ENCODE measurements at regions of chr7 and their contacts with region 1.

Region 1: DNA sequence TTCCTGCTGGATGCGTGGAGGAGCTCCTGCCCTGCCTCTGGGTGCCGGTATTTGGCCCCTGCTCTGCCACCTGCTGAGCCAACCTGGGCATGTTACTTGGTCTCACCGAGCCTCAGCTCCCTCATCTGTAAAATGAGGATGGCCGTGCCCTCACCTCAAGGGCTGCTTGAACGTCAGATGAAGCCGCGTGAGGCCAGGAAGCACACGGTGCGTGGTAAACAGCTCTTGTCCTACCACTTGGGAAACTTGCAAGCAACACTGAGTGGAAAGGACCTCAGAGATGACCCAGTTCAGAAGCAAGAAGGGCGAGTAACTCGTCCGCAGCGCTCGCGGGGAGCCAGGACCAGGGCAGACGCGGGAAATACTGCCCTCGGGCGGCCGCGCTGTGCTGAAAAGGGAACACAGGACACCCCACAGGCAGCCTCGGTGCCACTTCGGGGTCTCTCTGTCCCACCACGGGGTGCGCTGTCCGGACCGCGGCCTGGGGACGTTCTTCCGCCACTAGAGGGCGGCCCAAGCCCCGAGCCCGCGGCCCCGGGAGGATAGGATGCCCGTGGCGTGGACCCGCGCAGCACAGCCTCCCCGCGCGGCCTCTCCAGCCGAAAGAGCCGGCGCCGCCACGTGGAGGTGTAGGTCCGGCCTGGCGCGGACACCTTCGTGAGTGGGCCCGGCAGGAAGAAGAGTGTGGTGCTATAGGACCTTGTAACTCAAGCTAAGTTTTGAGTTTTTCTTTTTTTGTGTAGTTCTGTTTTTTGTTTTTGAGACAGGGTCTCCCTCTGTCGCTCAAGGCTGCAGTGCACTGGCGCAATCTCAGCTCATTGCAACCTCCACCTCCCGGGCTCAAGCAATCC is 94.1 kb downstream of the PRKAG2 start:
- DNase-seq: peak; percentile 40
- H3K4me3 Mint-ChIP-seq: peak overlapping the region; percentile 63
- H3K27ac Mint-ChIP-seq: peak overlapping the region; percentile 40
- H3K4me1 Mint-ChIP-seq: peaks cover 13% of the 10 kb centered on the region
- H3K27me3 Mint-ChIP-seq: no peaks in the 10 kb centered on the region

Region 2: DNA sequence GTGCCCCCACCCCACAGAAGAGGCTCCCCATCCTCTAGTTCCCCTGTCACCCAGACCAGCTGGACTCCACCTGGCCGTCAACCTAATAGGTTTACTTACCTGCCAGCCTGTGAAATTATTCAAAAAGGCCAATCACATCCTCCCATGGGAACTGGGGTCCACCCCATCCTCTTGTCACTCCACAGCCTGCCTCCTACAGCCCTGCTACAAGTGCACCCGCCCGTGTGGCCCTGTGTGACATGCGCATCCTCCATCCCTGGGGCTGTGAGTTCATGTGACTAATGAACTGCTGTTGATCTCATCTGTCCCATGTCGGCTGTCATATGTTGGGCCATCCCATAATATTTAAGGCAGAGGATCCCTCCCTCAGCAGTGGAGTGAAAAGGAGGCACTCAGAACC is 891.1 kb before region 1 on chr7:
- intact Hi-C with region 1: no loop called
- DNase-seq: no peak
- H3K4me3 Mint-ChIP-seq: no peak overlapping the region
- H3K27ac Mint-ChIP-seq: no peak overlapping the region
- H3K4me1 Mint-ChIP-seq: no peaks in the 10 kb centered on the region
- H3K27me3 Mint-ChIP-seq: peaks cover 21% of the 10 kb centered on the region

Region 3: DNA sequence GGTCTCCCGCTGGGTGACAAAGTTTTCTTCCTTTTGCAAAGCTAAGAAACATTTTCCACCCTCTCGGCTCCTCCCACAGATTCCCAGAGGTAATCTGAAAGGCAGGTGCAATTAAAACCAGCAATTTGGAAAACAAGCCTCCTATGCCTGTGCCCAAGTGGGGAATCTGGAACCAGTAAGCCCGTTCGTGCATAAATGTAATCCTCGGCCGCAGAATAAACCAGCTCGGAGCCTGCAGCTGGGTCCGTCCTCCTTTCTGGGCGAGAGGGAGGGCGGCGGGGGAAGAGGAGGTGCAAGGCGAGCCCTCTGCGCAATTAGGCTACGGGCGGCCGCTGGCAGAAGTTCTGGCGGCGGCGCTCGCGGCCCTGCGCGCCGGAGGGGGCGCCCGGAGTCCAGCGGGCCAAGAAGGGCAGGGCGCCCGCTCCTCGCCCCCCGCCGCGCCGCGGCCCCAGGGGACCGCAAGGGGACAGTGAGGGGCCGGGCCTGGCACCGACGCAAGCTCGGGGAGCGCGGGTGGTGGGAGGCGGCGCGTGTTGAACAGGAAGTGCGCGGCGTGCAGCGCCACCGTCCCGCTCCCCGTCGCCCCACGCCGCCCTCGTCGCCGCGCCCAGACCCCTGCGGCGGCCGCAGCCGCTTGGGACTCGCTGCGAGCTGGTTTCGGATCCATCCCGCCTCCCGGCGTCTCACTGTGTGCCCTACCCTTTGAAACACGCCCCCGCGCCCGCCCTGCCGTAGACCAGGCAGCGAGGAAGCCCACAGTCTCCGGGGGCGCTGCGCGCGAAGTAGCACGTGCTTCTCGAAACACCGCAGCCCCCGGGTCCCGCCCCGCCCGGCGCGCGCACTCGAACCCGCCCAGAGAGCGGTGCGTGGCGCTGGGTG is 94.3 kb after region 1 on chr7 and contains the start of gene PRKAG2:
- intact Hi-C with region 1: loop called (anchors 2 kb)
- DNase-seq: peak; percentile 52
- H3K4me3 Mint-ChIP-seq: peak within 1 kb of the TSS; percentile 93
- H3K27ac Mint-ChIP-seq: peak within 1 kb of the TSS; percentile 78
- H3K4me1 Mint-ChIP-seq: peaks cover 10% of the 10 kb centered on the region
- H3K27me3 Mint-ChIP-seq: peaks cover 25% of the 10 kb centered on the region
- total RNA-seq, gene PRKAG2: 13.3 and 14.9 TPM in 2 replicates

Region 4: DNA sequence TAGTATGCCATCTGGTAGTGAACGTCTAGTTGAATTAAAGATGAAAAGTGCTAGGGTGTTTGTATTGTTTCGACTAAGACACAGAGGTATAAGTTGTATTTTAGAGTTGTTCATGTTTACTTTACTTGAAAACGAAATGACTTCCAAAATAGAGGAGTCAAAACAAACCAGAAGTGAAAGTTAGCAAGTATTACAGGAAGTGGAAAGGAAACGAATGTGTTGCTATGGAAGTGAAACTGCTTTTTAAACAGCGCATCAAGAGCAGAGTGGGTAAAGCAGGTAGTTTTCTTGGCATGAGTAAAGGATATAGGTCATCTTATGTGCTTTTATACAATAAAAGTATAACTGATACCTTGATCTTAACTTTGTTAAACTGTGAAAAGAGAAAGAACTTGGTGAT is 153.4 kb after region 1 on chr7:
- intact Hi-C with region 1: loop called (anchors 5 kb)
- DNase-seq: no peak
- H3K4me3 Mint-ChIP-seq: peak overlapping the region; percentile 61
- H3K27ac Mint-ChIP-seq: peak overlapping the region; percentile 73
- H3K4me1 Mint-ChIP-seq: peaks cover 19% of the 10 kb centered on the region
- H3K27me3 Mint-ChIP-seq: peaks cover 12% of the 10 kb centered on the region

Measured in activated T-helper 2 cell treated with anti-CD3 and anti-CD28 coated beads, Interferon-gamma antibody, Interleukin-2, Interleukin-4, amounts not matched to agents 10 μg/mL and 5 μg/mL and 100 μg/mL, durations not matched to agents 14 hours and 24 hours and 36 hours (primary cell).